Sigmoid colon (tissue), 7 donors: ENCODE measurements at regions of chr1 and their contacts with region 1.

Region 1: GRCh38 chr1:229558571-229559335 is at the start of gene ABCB10:
- DNase-seq: peak; percentile 98
- H3K4me3 ChIP-seq: peak within 1 kb of the TSS; percentile 75 to 98 (median 82)
- H3K27ac ChIP-seq: peak within 1 kb of the TSS; percentile 92 to 99 (median 94)
- H3K4me1 ChIP-seq: peaks cover 0 to 58% (median 45%) of the 10 kb centered on the region in 4 donors
- H3K27me3 ChIP-seq: no peaks in the 10 kb centered on the region
- CTCF ChIP-seq: peak; percentile 57 to 75 (median 66)
- EP300 ChIP-seq: peak in 1 of 4 donors; percentile 61
- POLR2A ChIP-seq: peak; percentile 27 to 69
- total RNA-seq, gene ABCB10: 12.1 to 19.4 (median 16.5) TPM

Region 2: GRCh38 chr1:229482511-229482910 is 76.2 kb before region 1 on chr1:
- intact Hi-C with region 1: no loop called
- DNase-seq: no peak
- H3K4me3 ChIP-seq: no peak overlapping the region
- H3K27ac ChIP-seq: peak overlapping the region in 2 of 4 donors; percentile 21 to 52
- H3K4me1 ChIP-seq: peaks cover 0 to 8% (median 4%) of the 10 kb centered on the region in 4 donors
- H3K27me3 ChIP-seq: no peaks in the 10 kb centered on the region
- CTCF ChIP-seq: no peak
- EP300 ChIP-seq: no peak
- POLR2A ChIP-seq: no peak

Region 3: DNA sequence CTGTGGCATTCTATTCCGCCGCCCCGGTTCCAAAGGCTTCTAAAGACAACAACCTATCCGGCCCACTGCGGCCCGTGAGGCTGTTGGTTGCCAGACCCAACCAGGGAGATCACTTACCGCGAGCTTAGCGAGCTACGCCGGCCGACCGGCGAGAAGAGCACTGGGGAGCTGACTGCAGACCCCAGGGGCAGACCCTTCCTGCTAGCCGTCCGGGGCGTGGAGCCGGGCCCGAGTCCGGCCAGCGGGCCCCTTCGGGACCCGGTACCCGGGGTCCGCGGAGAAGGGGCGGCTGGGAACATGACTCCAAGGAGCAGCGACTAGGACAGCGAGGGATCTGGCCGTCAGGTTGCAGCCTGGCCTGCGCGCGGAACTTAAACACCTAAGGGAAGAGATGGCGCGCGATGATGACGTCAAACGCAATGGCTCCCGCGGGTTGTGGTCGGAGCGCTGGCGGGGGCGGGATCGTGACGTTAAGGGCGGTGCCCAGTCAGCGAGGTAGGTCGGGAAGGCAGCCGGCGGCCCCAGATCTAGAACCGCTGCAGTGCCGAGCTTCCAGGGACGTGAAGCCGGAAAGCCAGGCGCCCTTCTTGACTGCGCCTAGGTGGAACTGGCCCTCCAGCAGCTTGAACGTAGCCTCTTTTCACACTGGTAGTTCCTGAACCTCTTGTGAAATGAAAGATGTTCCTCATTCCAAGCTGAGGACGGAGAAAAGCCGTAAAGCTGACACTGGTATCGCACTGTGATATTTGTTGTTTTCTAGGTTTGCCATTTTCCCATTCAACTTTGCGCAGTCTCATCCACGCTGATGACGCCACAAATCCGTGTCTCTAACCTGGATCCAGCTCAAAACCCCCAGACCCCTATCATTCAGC is 50.6 kb before region 1 on chr1 and contains the start of gene NUP133:
- intact Hi-C with region 1: loop called (anchors 2 kb)
- DNase-seq: peak; percentile 100
- H3K4me3 ChIP-seq: peak within 1 kb of the TSS; percentile 68 to 99 (median 97)
- H3K27ac ChIP-seq: peak within 1 kb of the TSS; percentile 91 to 98 (median 96)
- H3K4me1 ChIP-seq: peaks cover 0 to 17% (median 11%) of the 10 kb centered on the region in 4 donors
- H3K27me3 ChIP-seq: no peaks in the 10 kb centered on the region
- CTCF ChIP-seq: no peak
- EP300 ChIP-seq: peak in 1 of 4 donors; percentile 37
- POLR2A ChIP-seq: peak; percentile 89 to 90
- total RNA-seq, gene NUP133: 23.7 to 31.7 (median 27.6) TPM

Region 4: DNA sequence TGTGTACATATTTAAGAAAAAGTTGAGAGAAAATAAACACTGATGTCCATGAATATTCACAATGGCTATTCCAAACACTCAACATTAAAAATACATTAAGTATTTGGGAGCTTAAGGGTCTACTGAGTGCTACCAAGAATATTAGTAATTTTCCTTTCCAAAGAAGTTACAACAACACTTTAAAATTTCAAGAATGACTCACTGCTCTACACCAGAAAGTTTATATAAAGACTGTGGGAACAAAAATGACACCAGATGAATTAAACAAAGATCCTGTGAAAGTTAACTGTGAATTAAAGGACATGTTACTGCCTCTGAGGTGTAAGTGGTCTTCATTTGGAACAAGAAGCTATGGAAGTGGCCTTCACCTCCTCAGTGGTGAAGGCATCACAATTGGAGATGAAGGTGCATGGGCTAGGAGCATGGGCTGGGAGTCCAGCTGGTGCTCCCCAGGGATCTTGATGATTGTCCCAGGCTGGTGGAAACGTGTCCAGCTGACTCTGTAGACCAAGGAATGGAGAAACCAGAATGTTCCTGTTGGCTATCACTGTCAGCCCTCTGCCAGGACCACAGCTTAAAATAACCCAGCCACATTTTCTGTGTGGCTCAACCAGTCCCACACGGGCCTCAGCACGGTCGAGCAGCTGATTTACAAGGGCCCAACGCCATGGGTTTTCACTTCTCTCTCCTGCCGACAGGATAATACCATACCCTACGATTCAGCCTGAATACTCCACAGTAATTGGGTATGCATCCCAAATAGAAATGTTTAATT is 38.4 kb after region 1 on chr1:
- intact Hi-C with region 1: loop called (anchors 2 kb)
- DNase-seq: peak; percentile 86
- H3K4me3 ChIP-seq: no peak overlapping the region
- H3K27ac ChIP-seq: peak overlapping the region; percentile 77 to 89 (median 84)
- H3K4me1 ChIP-seq: peaks cover 0 to 43% (median 33%) of the 10 kb centered on the region in 4 donors
- H3K27me3 ChIP-seq: no peaks in the 10 kb centered on the region
- CTCF ChIP-seq: peak in 2 of 4 experiments; percentile 9 to 14
- EP300 ChIP-seq: peak in 3 of 4 donors; percentile 31 to 51 (median 44)
- POLR2A ChIP-seq: no peak

Region 5: GRCh38 chr1:229625915-229626831 is 67.4 kb after region 1 on chr1 and contains the starts of genes TAF5L and URB2:
- intact Hi-C with region 1: loop called (anchors 1 kb)
- DNase-seq: peak; percentile 94
- H3K4me3 ChIP-seq: peak within 1 kb of the TSS; percentile 70 to 96 (median 84)
- H3K27ac ChIP-seq: peak within 1 kb of the TSS; percentile 88 to 95 (median 92)
- H3K4me1 ChIP-seq: peaks cover 0 to 52% (median 37%) of the 10 kb centered on the region in 4 donors
- H3K27me3 ChIP-seq: no peaks in the 10 kb centered on the region
- CTCF ChIP-seq: no peak
- EP300 ChIP-seq: no peak
- POLR2A ChIP-seq: no peak
- total RNA-seq, gene TAF5L: 11.1 to 18.0 (median 15.0) TPM
- total RNA-seq, gene URB2: 4.3 to 11.7 (median 7.4) TPM